GM10248 (cell line): ENCODE measurements at regions of chr2 and their contacts with region 1.

Region 1: GRCh38 chr2:47323009-47323821 is 79.7 kb upstream of the MSH2 start:
- DNase-seq: peak; percentile 82
- CTCF ChIP-seq: peak; percentile 99

Region 2: DNA sequence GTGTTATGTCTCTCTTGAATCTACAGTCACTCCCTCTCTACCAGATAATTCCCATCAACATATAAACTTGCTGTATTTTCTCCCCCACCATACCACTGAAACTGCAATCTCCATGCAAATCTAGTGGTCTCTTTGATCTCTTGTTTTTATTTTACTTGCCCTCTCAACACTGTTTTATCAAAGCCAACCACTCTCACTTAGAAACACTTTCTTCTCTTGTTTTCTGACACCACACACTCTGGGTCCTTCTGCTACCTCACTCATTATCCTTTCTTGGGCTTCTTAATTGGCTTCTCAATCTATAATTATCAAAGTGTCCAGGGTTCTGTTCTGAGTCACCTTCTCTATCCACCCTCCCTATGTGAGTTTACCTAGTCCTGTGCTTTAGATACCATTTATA is 405.6 kb before region 1 on chr2:
- CTCF ChIA-PET with region 1: interaction called, 20 read pairs
- POLR2A ChIA-PET with region 1: no interaction called
- DNase-seq: no peak
- CTCF ChIP-seq: no peak

Region 3: GRCh38 chr2:46936566-46936965 is 386.6 kb before region 1 on chr2:
- CTCF ChIA-PET with region 1: interaction called, 13 read pairs
- POLR2A ChIA-PET with region 1: no interaction called
- DNase-seq: no peak
- CTCF ChIP-seq: no peak

Region 4: DNA sequence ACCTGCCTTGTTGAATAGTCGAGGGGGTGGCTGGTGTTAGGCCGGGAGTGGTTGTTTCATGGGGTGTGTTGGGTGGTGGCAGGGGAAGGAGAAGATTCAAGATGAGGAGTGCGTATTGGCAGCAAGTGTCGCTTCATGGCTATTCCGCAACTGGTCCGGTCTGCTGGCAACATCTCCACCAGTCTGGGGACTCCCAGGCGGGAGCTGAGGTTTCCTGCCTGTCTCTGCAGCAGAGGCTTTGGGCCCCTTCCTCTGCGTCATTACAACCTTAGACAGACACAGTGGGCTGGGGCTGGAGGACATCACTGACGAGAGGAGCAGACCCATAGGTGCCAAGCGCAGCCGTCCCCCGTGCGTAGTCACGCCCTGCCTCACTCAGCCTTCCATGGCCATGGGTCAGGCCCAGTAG is 343.6 kb before region 1 on chr2:
- CTCF ChIA-PET with region 1: interaction called, 17 read pairs
- POLR2A ChIA-PET with region 1: no interaction called
- DNase-seq: peak; percentile 47
- CTCF ChIP-seq: no peak

Region 5: GRCh38 chr2:47079515-47080412 is 243.5 kb before region 1 on chr2:
- CTCF ChIA-PET with region 1: no interaction called
- POLR2A ChIA-PET with region 1: no interaction called
- DNase-seq: no peak
- CTCF ChIP-seq: no peak

Region 6: DNA sequence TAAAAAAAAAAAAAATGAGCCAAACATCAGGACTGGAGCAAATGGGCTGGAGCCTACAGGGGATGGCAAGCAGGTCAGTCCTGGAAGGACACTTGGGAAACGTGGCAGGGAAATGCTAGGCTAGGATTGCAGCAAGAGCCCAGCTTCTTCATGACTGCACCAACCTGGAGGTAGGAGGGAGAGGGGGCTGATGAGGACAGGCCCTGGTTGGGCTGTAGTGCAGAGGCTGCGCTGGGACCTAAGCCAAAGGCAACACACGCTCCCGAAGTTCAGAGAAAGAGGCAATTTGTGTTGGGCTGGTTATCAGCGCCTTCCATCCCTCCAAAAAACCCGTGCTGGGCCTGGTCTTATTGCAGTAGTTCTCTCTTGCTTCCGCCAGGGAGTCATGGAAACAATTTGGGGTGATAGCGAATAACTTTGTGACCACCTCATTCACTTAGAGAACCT is 85.8 kb before region 1 on chr2:
- CTCF ChIA-PET with region 1: no interaction called
- POLR2A ChIA-PET with region 1: no interaction called
- DNase-seq: no peak
- CTCF ChIP-seq: no peak

Region 7: DNA sequence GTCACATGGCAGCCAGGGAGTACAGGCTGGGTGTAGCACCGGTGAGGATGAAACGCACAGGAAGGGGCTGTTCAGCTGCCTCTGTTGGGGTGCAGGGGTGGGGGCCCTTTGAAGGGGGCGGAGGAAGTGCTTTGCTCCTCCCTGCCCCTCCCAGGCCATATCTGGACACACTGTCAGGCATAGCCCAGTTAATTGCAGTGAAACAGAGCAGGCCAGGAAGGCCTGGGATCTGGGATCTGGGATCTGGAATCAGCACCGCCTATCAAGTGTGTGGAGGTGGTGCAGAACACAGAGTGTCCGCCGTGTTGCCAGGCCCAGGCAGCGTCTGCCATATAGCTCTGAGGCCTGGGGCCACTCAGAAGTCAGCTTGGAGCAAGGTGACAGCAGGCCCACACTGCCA is 39.6 kb before region 1 on chr2:
- CTCF ChIA-PET with region 1: interaction called, 11 read pairs
- POLR2A ChIA-PET with region 1: no interaction called
- DNase-seq: no peak
- CTCF ChIP-seq: no peak

Region 8: GRCh38 chr2:47339745-47340541 is 16.7 kb after region 1 on chr2:
- CTCF ChIA-PET with region 1: interaction called, 106 read pairs
- POLR2A ChIA-PET with region 1: no interaction called
- DNase-seq: no peak
- CTCF ChIP-seq: no peak